ENCODE measurements at regions of chr18 and their contacts with region 1.

Region 1: DNA sequence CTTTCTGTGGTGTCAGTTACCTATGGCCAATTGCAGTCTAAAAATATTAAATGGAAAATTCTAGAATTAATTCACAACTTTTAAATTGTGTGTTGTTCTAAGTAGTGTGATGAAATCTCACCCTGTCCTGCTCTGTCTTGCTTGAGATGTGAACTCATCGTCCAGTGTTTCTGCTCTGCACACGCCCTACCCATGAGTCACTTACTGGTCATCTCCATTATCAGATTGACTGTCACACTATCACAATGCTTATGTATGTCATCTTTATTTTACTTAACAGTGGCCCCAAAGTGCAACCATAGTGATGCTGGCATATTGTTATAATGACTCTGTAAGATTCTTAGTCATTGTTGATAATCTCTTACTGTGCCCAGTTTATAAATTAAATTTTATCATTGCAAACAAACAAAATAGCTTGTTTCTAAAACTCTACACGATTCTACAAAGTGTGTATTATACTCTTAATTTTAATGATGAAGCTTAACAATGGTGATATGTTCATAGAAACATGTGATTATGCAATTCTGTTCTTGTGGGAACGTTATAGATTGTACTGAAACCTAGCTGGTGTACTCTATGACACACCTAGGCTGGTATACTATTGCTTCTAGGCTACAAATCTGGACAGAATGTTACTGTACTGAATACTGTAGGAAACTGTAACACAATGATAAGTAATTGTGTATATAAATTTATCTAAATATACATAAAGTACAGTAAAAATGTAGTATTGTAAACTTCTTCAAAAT is 1086.8 kb upstream of the PIK3C3 start:
- DNase-seq: peak; percentile 99
- H3K4me3 ChIP-seq: no peak overlapping the region
- H3K27ac ChIP-seq: peak overlapping the region; percentile 100
- H3K4me1 ChIP-seq: peaks cover 27% of the 10 kb centered on the region
- H3K27me3 ChIP-seq: no peaks in the 10 kb centered on the region
- CTCF ChIP-seq: no peak

Region 2: GRCh38 chr18:40529478-40529877 is 338.8 kb before region 1 on chr18:
- CTCF ChIA-PET with region 1: no interaction called
- dilution Hi-C with region 1: no loop called
- in situ Hi-C with region 1: no loop called
- intact Hi-C with region 1: loop called (anchors 2 kb)
- DNase-seq: peak; percentile 49
- H3K4me3 ChIP-seq: no peak overlapping the region
- H3K27ac ChIP-seq: no peak overlapping the region
- H3K4me1 ChIP-seq: peaks cover 4% of the 10 kb centered on the region
- H3K27me3 ChIP-seq: no peaks in the 10 kb centered on the region
- CTCF ChIP-seq: peak; percentile 4 to 42

Region 3: GRCh38 chr18:40670668-40671375 is 197.5 kb before region 1 on chr18:
- CTCF ChIA-PET with region 1: no interaction called
- dilution Hi-C with region 1: no loop called
- in situ Hi-C with region 1: no loop called
- intact Hi-C with region 1: loop called (anchors 10 kb)
- DNase-seq: no peak
- H3K4me3 ChIP-seq: no peak overlapping the region
- H3K27ac ChIP-seq: no peak overlapping the region
- H3K4me1 ChIP-seq: no peaks in the 10 kb centered on the region
- H3K27me3 ChIP-seq: no peaks in the 10 kb centered on the region
- CTCF ChIP-seq: no peak

Region 4: DNA sequence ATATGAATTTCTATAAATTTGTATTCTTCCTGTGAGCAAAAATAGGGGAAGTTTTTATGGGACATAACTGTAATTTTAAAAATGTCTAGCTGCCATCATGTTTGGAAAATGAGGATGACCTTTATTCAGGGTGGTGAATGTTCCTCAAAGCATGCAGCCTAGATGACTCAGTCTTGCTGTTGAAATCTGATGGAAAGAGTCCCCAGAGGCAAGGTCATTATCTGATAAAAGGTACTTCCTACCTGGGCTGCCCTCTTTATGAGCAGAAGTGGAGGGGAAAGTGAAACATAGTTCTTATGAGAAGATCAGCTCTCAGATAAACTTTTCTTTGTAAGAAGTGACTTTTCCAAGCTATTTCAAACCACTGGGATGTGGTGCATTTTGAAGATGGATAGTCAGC is 57.9 kb before region 1 on chr18:
- CTCF ChIA-PET with region 1: no interaction called
- dilution Hi-C with region 1: no loop called
- in situ Hi-C with region 1: no loop called
- intact Hi-C with region 1: loop called (anchors 1 kb)
- DNase-seq: peak; percentile 71
- H3K4me3 ChIP-seq: no peak overlapping the region
- H3K27ac ChIP-seq: no peak overlapping the region
- H3K4me1 ChIP-seq: peaks cover 5% of the 10 kb centered on the region
- H3K27me3 ChIP-seq: no peaks in the 10 kb centered on the region
- CTCF ChIP-seq: no peak

Measured in mammary epithelial cell (primary cell).